OCI-LY7 (cell line): ENCODE measurements at regions of chr17 and their contacts with region 1.

Region 1: GRCh38 chr17:996554-997344 is at the start of gene TIMM22:
- DNase-seq: peak; percentile 99
- H3K4me3 ChIP-seq: peak within 1 kb of the TSS; percentile 92
- H3K27ac ChIP-seq: peak within 1 kb of the TSS; percentile 59
- H3K4me1 ChIP-seq: peaks cover 12% of the 10 kb centered on the region
- CTCF ChIP-seq: peak; percentile 89
- total RNA-seq, gene TIMM22: 12.8 and 15.7 TPM in 2 replicates

Region 2: DNA sequence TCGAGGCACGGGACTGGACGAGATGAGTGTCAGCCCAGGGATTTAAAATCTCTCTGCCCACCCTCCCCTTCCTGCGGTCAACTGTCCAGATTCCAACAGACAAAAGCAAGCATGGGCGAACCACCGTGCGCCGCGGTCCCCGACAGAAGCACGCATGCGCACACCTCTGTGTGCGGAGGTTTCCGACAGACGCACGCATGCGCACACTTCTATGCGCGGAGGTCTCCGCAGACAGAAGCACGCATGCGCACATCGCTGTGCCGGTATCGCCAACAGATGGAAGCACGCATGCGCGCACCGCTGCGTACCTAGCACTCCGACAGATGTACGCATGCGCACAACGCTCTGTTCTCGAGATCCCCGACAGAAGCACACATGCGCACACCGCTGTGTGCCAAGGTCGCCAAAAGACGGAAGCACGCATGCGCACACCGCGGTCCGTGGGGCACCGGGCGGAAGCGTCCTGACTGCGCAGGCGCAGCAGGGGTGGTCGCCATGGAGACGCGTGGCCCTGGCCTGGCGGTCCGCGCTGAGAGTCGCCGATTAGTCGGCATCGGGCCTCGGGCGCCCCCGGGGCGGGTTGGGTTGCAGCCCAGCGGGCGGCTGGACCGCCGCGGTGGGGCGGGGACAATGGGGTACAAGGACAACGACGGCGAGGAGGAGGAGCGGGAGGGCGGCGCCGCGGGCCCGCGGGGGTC is 586.8 kb before region 1 on chr17:
- CTCF ChIA-PET with region 1: no interaction called
- POLR2A ChIA-PET with region 1: no interaction called
- intact Hi-C with region 1: loop called (anchors 5 kb)
- DNase-seq: peak; percentile 100
- H3K4me3 ChIP-seq: peak overlapping the region; percentile 79
- H3K27ac ChIP-seq: peak overlapping the region; percentile 35
- H3K4me1 ChIP-seq: peaks cover 13% of the 10 kb centered on the region
- CTCF ChIP-seq: no peak

Region 3: DNA sequence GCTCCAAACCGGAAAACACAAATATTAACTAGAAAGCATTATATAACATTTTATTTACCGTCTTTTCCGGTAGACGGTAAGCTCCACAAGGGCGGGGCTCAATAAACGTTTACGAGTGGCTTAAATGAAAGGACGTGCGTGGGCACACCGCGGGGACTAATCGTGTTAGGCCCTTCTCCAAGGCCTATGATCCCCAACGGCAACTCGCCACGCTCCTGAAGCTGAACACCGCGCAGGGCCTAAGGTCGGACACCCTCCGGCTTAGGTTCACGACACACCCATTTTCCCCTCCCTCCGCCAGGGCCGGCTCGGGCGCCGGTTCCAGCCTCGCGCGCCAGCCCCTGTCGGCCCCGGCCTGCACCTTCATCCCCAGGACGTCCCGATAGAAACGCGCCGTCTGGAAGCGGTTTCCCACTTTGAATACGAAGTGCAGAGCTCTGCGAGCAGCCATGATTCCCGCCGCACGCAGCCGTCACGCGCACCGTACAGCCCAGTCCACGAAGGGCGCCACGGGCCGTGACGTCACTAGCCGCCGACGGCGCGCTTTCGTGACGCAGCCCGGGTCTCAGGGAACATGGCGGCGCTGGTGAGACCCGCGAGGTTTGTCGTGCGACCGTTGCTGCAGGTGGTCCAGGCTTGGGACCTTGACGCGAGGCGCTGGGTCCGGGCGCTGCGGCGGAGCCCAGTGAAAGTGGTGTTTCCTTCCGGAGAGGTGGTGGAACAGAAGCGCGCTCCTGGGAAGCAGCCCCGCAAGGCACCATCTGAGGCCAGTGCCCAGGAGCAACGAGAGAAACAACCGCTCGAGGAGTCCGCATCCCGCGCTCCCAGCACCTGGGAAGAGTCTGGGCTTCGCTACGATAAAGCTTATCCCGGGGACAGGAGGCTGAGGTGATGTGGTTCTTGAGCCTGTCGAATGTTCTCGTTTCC is 214.7 kb before region 1 on chr17 and contains the starts of genes GLOD4 and MRM3:
- CTCF ChIA-PET with region 1: no interaction called
- POLR2A ChIA-PET with region 1: no interaction called
- intact Hi-C with region 1: loop called (anchors 5 kb)
- DNase-seq: peak; percentile 88
- H3K4me3 ChIP-seq: peak within 1 kb of the TSS; percentile 95
- H3K27ac ChIP-seq: peak within 1 kb of the TSS; percentile 50
- H3K4me1 ChIP-seq: peaks cover 21% of the 10 kb centered on the region
- CTCF ChIP-seq: 0 out of 2 replicates have a peak, but pooled peaks have one; percentile 7
- total RNA-seq, gene GLOD4: 48.4 and 80.2 TPM in 2 replicates
- total RNA-seq, gene MRM3: 35.8 and 47.1 TPM in 2 replicates

Region 4: GRCh38 chr17:879549-880442 is 117.0 kb before region 1 on chr17:
- CTCF ChIA-PET with region 1: no interaction called
- POLR2A ChIA-PET with region 1: no interaction called
- intact Hi-C with region 1: loop called (anchors 5 kb)
- DNase-seq: peak; percentile 70
- H3K4me3 ChIP-seq: no peak overlapping the region
- H3K27ac ChIP-seq: no peak overlapping the region
- H3K4me1 ChIP-seq: no peaks in the 10 kb centered on the region
- CTCF ChIP-seq: peak; percentile 71

Region 5: DNA sequence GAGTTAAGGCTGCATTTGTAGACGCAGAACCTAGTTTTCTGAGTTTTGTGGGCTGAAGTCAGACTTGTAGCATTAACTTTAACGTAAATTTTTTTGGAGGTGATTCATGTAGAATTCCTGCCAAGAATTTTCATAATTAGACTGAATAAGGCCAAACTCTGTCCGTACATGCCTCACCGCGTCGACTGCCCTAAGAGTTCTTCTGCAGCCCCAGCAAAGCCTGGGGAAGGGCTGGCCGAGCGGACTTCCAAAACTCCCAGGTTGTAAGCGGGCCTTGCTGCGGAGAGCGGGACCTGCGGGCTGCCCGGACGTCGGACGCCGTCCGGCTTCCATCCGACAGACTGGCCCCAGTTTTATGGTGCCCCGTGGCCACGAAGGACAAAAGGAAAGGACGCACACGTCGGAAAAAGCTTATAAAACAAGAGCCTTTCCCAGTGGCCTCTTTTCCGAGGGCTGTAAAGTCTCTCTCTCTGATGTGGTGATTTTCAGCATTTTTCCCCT is 92.7 kb before region 1 on chr17:
- CTCF ChIA-PET with region 1: no interaction called
- POLR2A ChIA-PET with region 1: no interaction called
- intact Hi-C with region 1: no loop called
- DNase-seq: no peak
- H3K4me3 ChIP-seq: no peak overlapping the region
- H3K27ac ChIP-seq: no peak overlapping the region
- H3K4me1 ChIP-seq: no peaks in the 10 kb centered on the region
- CTCF ChIP-seq: no peak

Region 6: DNA sequence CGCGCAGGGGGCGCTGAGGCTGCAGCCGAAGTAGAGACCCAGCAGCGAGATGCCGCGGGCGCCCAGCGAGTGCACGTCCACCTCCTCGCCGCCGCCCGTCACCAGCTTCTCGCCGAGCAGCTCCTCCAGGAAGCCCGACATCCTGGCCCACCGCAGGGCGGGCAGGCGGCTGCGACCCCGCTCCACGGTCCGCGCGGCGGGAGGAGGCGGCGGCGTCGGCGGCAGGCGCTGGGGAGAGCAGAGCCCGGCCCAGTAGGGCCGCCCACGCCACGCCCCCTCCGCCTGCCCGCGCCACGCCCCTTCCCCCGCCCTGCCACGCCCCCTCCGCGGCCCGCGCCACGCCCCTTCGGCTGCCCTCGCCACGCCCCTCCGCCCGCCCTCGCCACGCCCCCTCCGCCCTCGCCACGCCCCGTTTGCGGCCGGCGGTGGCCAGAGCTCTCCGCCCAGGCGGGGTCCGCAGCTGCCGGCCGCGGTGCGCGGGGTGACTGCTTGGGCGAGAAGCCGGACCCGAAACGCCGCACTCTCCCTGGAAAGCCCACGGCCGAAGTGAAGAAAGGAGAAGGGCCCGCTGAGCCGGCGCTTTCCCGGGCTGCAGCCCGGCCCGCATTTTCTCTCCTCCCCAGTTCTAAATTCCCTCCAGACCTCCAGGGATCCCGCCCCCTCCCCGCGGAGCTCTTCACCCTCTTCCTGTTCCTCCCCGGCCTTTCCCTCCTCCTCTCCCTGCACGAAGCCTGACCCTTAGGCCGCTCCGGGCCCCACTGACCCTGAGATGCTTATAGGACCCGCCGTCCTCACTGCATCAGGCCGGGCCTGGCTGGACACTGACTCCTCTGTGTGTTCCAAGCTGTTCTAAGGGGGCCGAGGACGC is 17.0 kb before region 1 on chr17 and contains the start of gene NXN:
- CTCF ChIA-PET with region 1: no interaction called
- POLR2A ChIA-PET with region 1: no interaction called
- intact Hi-C with region 1: loop called (anchors 1 kb)
- DNase-seq: peak; percentile 81
- H3K4me3 ChIP-seq: peak within 1 kb of the TSS; percentile 68
- H3K27ac ChIP-seq: peak within 1 kb of the TSS; percentile 67
- H3K4me1 ChIP-seq: peaks cover 17% of the 10 kb centered on the region
- CTCF ChIP-seq: peak; percentile 28; the same call in 1 of the 2 replicates
- total RNA-seq, gene NXN: 0.93 and 1.3 TPM in 2 replicates

Region 7: DNA sequence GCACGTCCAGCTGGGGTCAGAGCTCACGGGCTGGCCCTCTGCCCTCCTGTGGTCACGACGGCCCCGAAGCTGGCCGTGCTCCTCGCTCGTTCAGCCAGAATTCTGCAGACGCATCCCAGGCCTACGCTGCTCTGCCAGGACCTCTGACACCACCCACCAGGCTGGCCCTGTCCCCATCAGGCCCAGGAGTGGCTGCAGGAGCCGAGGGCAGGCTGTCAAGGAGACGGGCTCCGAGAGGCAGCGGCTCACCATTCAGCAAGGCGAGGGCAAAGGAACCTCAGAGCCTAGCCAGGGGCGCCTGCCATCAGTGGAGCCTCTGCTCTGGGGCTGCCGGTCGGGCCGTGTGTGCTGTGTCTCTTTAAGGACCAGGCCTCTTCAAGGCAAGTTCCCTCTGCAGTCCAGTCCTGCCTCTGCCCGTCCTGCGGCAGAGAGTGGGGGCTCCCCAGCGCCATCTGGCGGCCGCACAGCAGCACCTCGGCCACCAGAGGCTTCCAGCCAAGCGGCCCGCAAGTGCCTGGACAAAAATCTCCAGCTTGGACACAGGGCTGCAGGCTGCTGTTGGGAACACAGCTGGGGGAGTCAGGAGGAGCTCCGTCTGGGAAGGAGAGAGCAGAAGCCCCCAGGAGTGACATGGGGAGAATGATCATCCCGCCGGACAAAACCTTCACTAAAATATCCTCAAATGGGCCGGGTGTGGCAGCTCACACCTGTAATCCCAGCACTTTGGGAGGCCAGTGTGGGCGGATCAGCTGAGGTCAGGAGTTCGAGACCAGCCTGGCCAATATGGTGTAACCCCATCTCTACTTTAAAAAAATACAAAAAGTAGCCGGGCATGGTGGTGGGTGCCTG is 190.4 kb after region 1 on chr17:
- CTCF ChIA-PET with region 1: interaction called, 3 read pairs
- POLR2A ChIA-PET with region 1: no interaction called
- intact Hi-C with region 1: loop called (anchors 5 kb)
- DNase-seq: peak; percentile 80
- H3K4me3 ChIP-seq: no peak overlapping the region
- H3K27ac ChIP-seq: no peak overlapping the region
- H3K4me1 ChIP-seq: peaks cover 71% of the 10 kb centered on the region
- CTCF ChIP-seq: peak; percentile 93